Activated B cell treated with CpG ODN at 0.5 μM for 24 hours (primary cell): ENCODE measurements at regions of chr3 and their contacts with region 1.

Region 1: DNA sequence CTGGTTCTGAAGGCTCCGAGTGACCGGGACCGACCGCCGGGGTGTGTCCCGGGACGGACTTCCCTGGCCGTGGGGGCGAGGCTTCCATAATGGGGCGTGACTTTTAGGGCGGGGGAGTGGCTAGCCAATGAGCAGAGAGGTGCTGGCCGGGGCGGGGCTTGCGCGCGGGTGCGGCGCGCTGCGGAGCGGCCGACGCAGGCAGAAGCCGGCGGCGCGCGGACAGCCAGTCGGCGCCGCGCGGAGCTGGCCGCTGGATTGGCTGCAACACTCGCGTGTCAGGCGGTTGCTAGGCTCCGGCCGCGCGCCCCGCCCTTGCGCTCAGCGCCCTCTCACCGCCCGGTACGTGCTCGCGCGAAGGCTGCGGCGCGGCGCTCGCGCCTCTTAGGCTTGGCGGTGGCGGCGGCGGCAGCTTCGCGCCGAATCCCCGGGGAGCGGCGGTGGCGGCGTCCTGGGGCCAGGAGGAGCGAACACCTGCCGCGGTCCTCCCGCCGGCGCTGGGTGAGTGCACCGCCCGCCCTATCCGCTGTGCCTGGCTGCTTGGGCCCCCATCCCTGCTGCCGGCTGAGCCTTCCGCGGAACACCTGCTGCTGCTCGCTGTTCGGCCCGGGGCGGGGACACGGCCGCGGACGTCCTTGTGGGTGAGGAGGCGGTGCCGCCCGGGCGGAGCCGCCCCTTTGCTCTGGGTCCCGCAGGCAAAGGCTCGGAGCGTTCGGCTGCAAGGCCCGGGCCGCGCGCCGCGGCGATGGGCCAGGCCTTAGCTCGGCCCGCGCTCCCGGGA is at the start of gene DAG1:
- DNase-seq: peak; percentile 97
- ATAC-seq: peak; percentile 87
- H3K4me3 Mint-ChIP-seq: peak within 1 kb of the TSS; percentile 91
- H3K27ac Mint-ChIP-seq: peak within 1 kb of the TSS; percentile 96
- H3K4me1 Mint-ChIP-seq: peaks cover 26% of the 10 kb centered on the region
- H3K27me3 Mint-ChIP-seq: no peaks in the 10 kb centered on the region
- CTCF ChIP-seq: no peak
- total RNA-seq, gene DAG1: 18.5 and 19.7 TPM in 2 replicates

Region 2: GRCh38 chr3:49445381-49445780 is 24.7 kb before region 1 on chr3:
- CTCF ChIA-PET with region 1: interaction called, 13 read pairs
- POLR2A ChIA-PET with region 1: interaction called, 6 read pairs
- intact Hi-C with region 1: loop called (anchors 1 kb)
- DNase-seq: no peak
- ATAC-seq: no peak
- H3K4me3 Mint-ChIP-seq: no peak overlapping the region
- H3K27ac Mint-ChIP-seq: peak overlapping the region; percentile 35
- H3K4me1 Mint-ChIP-seq: peaks cover 22% of the 10 kb centered on the region
- H3K27me3 Mint-ChIP-seq: no peaks in the 10 kb centered on the region
- CTCF ChIP-seq: no peak